ENCODE measurements at regions of chr3 and their contacts with region 1.

Region 1: DNA sequence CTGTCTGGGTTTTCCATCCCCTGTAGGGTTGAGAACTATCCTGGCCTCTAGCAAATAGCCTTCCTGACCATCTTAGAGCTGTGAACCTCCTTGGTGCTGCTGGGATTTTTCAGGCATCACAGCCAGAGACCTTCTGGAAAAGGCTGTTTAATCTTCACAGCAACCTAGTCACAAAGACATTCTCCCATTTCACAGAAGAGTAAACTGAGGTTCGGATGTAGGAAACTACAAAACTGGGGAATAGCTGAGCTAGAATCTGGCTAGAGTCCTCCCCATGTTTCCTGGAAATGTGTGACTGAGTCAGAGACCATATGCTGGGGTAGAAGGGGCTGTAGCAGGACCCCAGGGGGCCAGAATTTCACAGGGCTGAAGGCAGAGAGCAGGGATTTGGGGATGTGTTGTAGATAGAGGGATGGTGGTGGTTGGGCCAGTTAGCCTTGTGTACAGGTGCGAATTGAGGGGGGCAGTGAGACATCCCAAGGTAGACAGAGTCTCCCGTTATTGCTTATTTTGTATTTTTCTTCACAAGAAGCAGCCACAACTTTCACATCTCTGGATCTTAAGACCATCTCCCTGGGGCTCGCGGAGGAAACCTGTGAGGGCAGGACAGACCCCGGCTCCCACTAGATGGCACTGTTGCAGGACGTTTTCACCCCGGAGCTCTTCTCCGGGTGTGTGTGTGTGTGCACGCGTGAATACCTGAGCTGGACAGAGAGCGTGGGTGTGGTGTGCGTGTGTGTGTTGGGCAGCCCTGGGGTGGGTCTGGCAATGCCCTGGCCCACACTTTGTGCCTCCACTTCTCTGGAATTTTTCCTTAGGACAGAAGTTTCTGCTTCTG is 66.9 kb upstream of the PRR23C start:
- H3K4me3 ChIP-seq: no peak overlapping the region
- H3K27ac ChIP-seq: no peak overlapping the region
- H3K4me1 ChIP-seq: no peaks in the 10 kb centered on the region
- CTCF ChIP-seq: peak; percentile 54

Region 2: GRCh38 chr3:139095803-139096466 is 15.7 kb before region 1 on chr3:
- CTCF ChIA-PET with region 1: interaction called, 13 read pairs
- POLR2A ChIA-PET with region 1: no interaction called
- H3K4me3 ChIP-seq: no peak overlapping the region
- H3K27ac ChIP-seq: no peak overlapping the region
- H3K4me1 ChIP-seq: no peaks in the 10 kb centered on the region
- CTCF ChIP-seq: no peak

Region 3: DNA sequence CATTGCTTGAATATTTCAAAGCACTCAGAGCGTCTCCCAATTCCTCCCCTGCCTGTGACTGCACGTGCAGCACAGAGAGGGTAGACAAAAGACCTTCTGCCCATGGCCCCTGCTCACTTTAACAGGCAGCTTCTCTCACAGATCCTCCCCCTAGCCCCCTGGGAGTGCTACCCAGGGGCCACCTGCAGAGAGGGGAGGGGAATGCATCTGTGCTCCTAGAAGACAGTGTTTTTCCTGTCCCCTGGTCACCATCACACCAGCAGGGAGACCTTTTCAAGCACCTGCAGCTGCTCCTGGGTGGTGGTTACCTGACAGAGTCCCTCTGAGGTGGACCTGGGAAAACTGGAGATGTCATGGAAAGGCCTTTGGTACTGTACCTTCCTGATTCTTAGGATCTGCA is 10.2 kb before region 1 on chr3:
- CTCF ChIA-PET with region 1: interaction called, 13 read pairs
- POLR2A ChIA-PET with region 1: no interaction called
- H3K4me3 ChIP-seq: no peak overlapping the region
- H3K27ac ChIP-seq: no peak overlapping the region
- H3K4me1 ChIP-seq: no peaks in the 10 kb centered on the region
- CTCF ChIP-seq: no peak

Region 4: GRCh38 chr3:139319428-139320402 is 208.1 kb after region 1 on chr3:
- CTCF ChIA-PET with region 1: interaction called, 10 read pairs
- POLR2A ChIA-PET with region 1: no interaction called
- H3K4me3 ChIP-seq: no peak overlapping the region
- H3K27ac ChIP-seq: no peak overlapping the region
- H3K4me1 ChIP-seq: no peaks in the 10 kb centered on the region
- CTCF ChIP-seq: no peak

Region 5: GRCh38 chr3:139329345-139329850 is 217.8 kb after region 1 on chr3:
- CTCF ChIA-PET with region 1: interaction called, 35 read pairs
- POLR2A ChIA-PET with region 1: no interaction called
- H3K4me3 ChIP-seq: peak overlapping the region; percentile 27; the same call in 1 of the 2 replicates
- H3K27ac ChIP-seq: no peak overlapping the region
- H3K4me1 ChIP-seq: no peaks in the 10 kb centered on the region
- CTCF ChIP-seq: peak; percentile 99

Region 6: GRCh38 chr3:139353920-139354556 is 242.4 kb after region 1 on chr3:
- CTCF ChIA-PET with region 1: interaction called, 10 read pairs
- POLR2A ChIA-PET with region 1: no interaction called
- H3K4me3 ChIP-seq: no peak overlapping the region
- H3K27ac ChIP-seq: no peak overlapping the region
- H3K4me1 ChIP-seq: no peaks in the 10 kb centered on the region
- CTCF ChIP-seq: peak; percentile 50

Measured in HEK293 (cell line).